A673 (cell line): ENCODE measurements at regions of chr11 and their contacts with region 1.

Region 1: GRCh38 chr11:90391756-90392155 is 168.9 kb upstream of the CHORDC1 start:
- DNase-seq: no peak
- H3K4me3 ChIP-seq: no peak overlapping the region
- H3K27ac ChIP-seq: no peak overlapping the region
- H3K4me1 ChIP-seq: peaks cover 8% of the 10 kb centered on the region
- H3K27me3 ChIP-seq: no peaks in the 10 kb centered on the region
- CTCF ChIP-seq: no peak

Region 2: DNA sequence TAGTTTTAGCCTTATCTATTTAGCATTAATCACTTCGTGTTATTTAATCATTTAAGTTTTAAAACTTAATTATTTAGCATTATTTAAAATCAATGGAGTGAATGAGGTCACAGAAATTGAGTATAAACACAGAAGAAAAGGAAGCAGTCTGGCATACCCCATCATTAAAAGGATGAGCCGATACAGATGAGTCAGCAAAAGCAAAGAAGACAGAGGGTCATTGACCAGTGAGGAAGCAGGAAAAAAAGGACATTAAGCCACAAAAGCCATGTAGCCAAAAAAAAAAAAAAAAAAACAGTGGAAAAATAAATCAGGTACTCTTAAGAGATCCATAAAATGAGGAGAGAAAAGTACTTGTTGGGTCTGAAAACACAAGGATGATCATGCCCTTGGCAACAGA is 1142.6 kb before region 1 on chr11:
- CTCF ChIA-PET with region 1: no interaction called
- POLR2A ChIA-PET with region 1: no interaction called
- intact Hi-C with region 1: no loop called
- DNase-seq: no peak
- H3K4me3 ChIP-seq: no peak overlapping the region
- H3K27ac ChIP-seq: no peak overlapping the region
- H3K4me1 ChIP-seq: no peaks in the 10 kb centered on the region
- H3K27me3 ChIP-seq: no peaks in the 10 kb centered on the region
- CTCF ChIP-seq: no peak

Region 3: GRCh38 chr11:90407350-90407749 is 15.6 kb after region 1 on chr11:
- CTCF ChIA-PET with region 1: no interaction called
- POLR2A ChIA-PET with region 1: no interaction called
- intact Hi-C with region 1: loop called (anchors 2 kb)
- DNase-seq: no peak
- H3K4me3 ChIP-seq: no peak overlapping the region
- H3K27ac ChIP-seq: no peak overlapping the region
- H3K4me1 ChIP-seq: no peaks in the 10 kb centered on the region
- H3K27me3 ChIP-seq: no peaks in the 10 kb centered on the region
- CTCF ChIP-seq: no peak

Region 4: DNA sequence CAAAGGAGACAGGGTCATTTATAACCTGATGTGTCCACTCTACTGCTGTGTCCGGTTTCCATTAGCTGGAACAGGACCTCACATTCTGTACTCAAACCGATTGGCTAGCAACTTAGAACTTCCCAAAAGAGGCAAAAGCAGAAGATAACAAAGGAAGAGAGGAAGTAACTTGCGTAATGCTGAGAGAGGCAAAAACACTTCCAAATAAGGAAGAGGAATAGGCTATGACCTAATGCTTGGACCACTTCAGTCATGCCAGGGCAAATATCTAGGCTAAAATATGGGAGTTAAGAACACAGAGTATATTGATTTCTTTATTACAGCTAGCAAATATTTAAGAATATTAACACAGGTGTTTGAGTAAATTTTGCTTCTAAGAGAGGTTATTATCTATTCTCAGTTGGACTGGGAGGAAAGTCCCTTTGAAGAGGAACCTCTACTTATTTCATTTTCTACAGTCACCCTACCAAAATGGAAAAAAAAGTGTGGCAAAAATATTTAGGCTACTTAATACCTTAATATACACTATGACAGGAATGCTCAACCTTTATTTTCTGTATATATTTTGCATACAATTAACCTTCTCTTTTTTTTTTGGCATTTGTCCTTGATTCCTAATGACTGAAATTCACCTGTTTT is 330.9 kb after region 1 on chr11:
- CTCF ChIA-PET with region 1: no interaction called
- POLR2A ChIA-PET with region 1: no interaction called
- intact Hi-C with region 1: no loop called
- DNase-seq: no peak
- H3K4me3 ChIP-seq: no peak overlapping the region
- H3K27ac ChIP-seq: no peak overlapping the region
- H3K4me1 ChIP-seq: no peaks in the 10 kb centered on the region
- H3K27me3 ChIP-seq: no peaks in the 10 kb centered on the region
- CTCF ChIP-seq: no peak